ENCODE measurements at regions of chr3 and their contacts with region 1.

Region 1: GRCh38 chr3:42746455-42747450 is 26.3 kb downstream of the CCDC13 start:
- DNase-seq: no peak
- H3K4me3 ChIP-seq: no peak overlapping the region
- H3K27ac ChIP-seq: no peak overlapping the region
- H3K4me1 ChIP-seq: no peaks in the 10 kb centered on the region
- H3K27me3 ChIP-seq: no peaks in the 10 kb centered on the region
- CTCF ChIP-seq: no peak
- EP300 ChIP-seq: no peak
- RAD21 ChIP-seq: no peak

Region 2: GRCh38 chr3:42652611-42653302 is 94.0 kb before region 1 on chr3:
- CTCF ChIA-PET with region 1: interaction called, 12 read pairs
- POLR2A ChIA-PET with region 1: no interaction called
- DNase-seq: peak; percentile 27
- H3K4me3 ChIP-seq: peak overlapping the region; percentile 79 to 91
- H3K27ac ChIP-seq: peak overlapping the region; percentile 83 to 84
- H3K4me1 ChIP-seq: peaks cover 24 to 42% of the 10 kb centered on the region in 2 experiments
- H3K27me3 ChIP-seq: no peaks in the 10 kb centered on the region
- CTCF ChIP-seq: no peak
- EP300 ChIP-seq: no peak
- RAD21 ChIP-seq: no peak

Region 3: DNA sequence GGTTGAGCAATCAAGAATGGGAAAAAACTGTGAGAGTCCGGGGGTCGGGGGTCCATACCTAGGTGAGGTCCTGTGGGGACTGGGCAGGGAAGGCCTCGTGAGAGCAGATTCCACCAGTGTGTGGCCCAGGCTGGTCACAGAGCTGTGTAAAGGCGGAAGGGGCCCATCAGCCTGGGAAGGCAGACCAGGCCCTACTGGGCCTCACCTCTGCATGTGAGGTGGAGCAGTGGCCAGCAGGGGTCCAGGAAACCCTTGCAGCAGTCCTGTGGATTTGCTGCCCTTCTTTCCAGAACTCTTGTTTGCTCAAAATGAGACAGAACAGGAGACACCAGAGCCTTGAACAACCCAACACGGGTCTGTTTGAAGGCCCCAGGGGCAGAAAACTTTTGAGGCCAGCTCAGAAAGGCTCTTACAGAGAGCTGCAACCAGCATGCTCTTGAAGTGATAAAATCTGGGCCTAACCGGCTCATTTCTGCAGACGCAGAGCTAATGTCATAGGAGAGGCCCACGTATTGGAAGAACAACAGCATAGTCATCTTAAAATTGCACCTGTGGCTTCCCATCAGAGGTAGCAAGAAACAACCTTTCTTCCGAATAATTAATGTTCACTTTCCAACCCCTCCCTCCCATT is 13.8 kb before region 1 on chr3:
- CTCF ChIA-PET with region 1: interaction called, 92 read pairs
- POLR2A ChIA-PET with region 1: no interaction called
- DNase-seq: no peak
- H3K4me3 ChIP-seq: no peak overlapping the region
- H3K27ac ChIP-seq: no peak overlapping the region
- H3K4me1 ChIP-seq: peaks cover 0 to 12% of the 10 kb centered on the region in 2 experiments; a peak in 1 of 4 replicates
- H3K27me3 ChIP-seq: no peaks in the 10 kb centered on the region; the same call in 1 of the 2 replicates
- CTCF ChIP-seq: no peak
- EP300 ChIP-seq: no peak
- RAD21 ChIP-seq: no peak

Region 4: GRCh38 chr3:42763021-42763420 is 16.3 kb after region 1 on chr3:
- CTCF ChIA-PET with region 1: interaction called, 92 read pairs
- POLR2A ChIA-PET with region 1: no interaction called
- DNase-seq: no peak
- H3K4me3 ChIP-seq: no peak overlapping the region
- H3K27ac ChIP-seq: no peak overlapping the region
- H3K4me1 ChIP-seq: peaks cover 0 to 18% of the 10 kb centered on the region in 2 experiments; a peak in 1 of 4 replicates
- H3K27me3 ChIP-seq: no peaks in the 10 kb centered on the region
- CTCF ChIP-seq: no peak
- EP300 ChIP-seq: no peak
- RAD21 ChIP-seq: no peak

Region 5: GRCh38 chr3:42946050-42946449 is 199.3 kb after region 1 on chr3:
- CTCF ChIA-PET with region 1: no interaction called
- POLR2A ChIA-PET with region 1: no interaction called
- DNase-seq: no peak
- H3K4me3 ChIP-seq: no peak overlapping the region
- H3K27ac ChIP-seq: no peak overlapping the region
- H3K4me1 ChIP-seq: no peaks in the 10 kb centered on the region
- H3K27me3 ChIP-seq: no peaks in the 10 kb centered on the region
- CTCF ChIP-seq: no peak
- EP300 ChIP-seq: no peak
- RAD21 ChIP-seq: no peak

Region 6: DNA sequence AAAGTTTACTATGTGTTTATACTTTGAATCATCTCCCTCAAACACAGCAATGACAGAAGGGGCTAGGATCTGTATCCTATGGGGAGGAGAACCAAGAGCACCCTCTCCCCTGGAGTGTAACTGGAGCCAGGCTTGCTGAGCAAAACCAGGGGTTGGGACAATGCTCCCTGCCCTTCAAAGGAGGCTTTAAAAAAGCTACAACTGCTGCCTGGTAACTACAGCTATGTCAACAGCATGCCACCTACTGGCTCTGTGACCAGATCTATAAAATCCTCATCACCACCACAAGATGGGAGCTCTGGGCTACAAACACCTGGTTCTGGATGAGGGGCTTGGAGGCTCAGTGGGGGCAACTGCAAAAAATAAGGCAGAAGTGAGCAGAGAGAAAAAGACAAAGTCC is 813.2 kb after region 1 on chr3:
- CTCF ChIA-PET with region 1: no interaction called
- POLR2A ChIA-PET with region 1: no interaction called
- DNase-seq: no peak
- H3K4me3 ChIP-seq: no peak overlapping the region
- H3K27ac ChIP-seq: no peak overlapping the region
- H3K4me1 ChIP-seq: no peaks in the 10 kb centered on the region
- H3K27me3 ChIP-seq: no peaks in the 10 kb centered on the region
- CTCF ChIP-seq: no peak
- EP300 ChIP-seq: no peak
- RAD21 ChIP-seq: no peak

Measured in SK-N-SH (cell line).